Colonic mucosa (tissue), 4 donors: ENCODE measurements at regions of chr7 and their contacts with region 1.

Region 1: DNA sequence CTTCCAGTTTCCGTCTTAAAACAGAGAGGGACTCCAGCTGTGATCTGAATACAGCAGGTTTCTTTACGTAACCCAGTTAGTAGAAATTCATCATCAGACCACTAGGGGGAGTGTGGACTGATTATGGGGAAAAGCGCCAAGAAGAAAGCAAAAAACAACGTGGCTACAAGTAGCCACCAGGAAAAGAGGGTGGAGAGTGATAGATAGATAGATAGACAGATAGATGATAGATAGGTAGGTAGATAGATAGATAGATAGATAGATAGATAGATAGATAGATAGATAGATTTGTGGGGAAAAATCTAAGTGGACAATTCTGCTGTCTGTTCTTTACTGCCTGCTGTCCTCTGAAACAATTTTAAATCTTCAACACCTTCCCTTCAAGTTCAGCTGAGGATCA is 12.7 kb upstream of the AKR1B10 start:
- DNase-seq: peak; percentile 58
- H3K4me3 ChIP-seq: no peak overlapping the region
- H3K27ac ChIP-seq: no peak overlapping the region
- H3K4me1 ChIP-seq: no peaks in the 10 kb centered on the region
- H3K27me3 ChIP-seq: no peaks in the 10 kb centered on the region
- CTCF ChIP-seq: peak; percentile 69

Region 2: DNA sequence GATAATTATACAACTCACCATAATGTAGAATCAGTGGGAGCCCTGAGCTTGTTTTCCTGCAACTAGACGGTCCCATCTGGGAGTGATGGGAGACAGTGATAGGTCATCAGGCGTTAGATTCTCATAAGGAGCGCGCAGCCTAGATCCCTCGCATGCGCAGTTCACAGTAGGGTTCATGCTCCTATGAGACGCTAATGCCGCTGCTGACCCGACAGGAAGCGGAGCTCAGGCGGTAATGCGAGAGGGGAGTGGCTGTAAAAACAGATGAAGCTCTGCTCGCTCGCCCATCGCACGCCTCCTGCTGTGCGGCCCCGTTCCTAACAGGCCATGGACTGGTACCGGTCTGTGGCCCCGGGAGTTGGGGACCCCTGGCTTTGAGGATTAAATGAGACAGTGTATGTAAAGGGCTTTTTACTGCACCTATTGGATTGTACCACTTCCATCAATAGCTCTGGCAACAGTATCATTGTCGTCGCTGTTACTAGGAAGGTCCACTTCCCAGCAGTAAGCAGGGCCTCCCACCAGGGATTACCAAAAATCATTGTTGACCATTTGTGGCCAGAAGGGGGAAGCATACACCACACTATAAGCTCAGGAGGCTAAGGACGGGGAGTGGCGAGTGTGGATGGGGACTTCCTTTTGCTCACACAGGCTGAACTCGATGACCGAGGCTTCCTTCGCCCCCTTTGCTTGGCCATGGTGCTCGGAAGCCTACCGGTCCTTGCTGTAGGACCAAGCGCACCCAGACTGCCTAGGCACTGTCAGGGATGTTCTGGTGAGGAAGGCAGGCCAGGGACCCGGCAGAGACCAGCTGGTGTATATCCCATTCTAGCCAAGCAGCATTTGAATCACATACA is 82.1 kb before region 1 on chr7:
- intact Hi-C with region 1: loop called (anchors 2 kb)
- DNase-seq: peak; percentile 89
- H3K4me3 ChIP-seq: peak overlapping the region; percentile 30
- H3K27ac ChIP-seq: peak overlapping the region; percentile 89
- H3K4me1 ChIP-seq: peaks cover 6% of the 10 kb centered on the region
- H3K27me3 ChIP-seq: no peaks in the 10 kb centered on the region
- CTCF ChIP-seq: peak; percentile 77

Region 3: DNA sequence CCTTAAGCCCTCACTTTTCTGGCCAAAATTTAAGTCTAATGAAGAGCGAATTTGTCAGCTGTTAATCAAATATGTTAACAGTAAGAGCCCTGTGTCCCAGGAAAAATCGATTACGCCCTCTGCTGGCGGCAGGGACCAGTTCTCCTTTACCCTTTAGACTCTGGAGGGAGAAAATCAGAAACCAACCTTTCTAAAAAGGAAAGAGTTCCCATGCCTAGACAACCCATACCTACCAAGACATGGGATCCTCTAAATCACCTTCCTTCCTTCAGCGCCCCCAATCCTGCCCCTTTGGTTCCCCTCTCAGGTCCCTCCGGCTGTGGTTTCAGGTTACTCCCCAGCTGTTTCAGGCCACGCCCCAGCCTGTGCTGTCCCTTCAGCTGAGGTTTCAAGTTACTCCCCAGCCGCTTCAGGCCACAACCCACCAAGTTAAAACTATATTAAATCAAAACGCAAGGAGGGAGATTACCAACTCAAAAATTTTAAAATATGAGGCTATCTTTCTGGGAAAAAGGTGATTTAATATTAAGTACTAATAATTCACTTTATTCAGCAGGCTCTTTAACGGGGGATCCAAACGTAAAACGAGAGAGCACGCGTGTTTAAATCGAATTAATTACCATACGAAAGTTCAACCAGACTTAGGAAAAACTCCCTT is 32.9 kb after region 1 on chr7:
- intact Hi-C with region 1: loop called (anchors 2 kb)
- DNase-seq: peak; percentile 85
- H3K4me3 ChIP-seq: peak overlapping the region; percentile 26
- H3K27ac ChIP-seq: no peak overlapping the region
- H3K4me1 ChIP-seq: no peaks in the 10 kb centered on the region
- H3K27me3 ChIP-seq: no peaks in the 10 kb centered on the region
- CTCF ChIP-seq: peak; percentile 89

Region 4: DNA sequence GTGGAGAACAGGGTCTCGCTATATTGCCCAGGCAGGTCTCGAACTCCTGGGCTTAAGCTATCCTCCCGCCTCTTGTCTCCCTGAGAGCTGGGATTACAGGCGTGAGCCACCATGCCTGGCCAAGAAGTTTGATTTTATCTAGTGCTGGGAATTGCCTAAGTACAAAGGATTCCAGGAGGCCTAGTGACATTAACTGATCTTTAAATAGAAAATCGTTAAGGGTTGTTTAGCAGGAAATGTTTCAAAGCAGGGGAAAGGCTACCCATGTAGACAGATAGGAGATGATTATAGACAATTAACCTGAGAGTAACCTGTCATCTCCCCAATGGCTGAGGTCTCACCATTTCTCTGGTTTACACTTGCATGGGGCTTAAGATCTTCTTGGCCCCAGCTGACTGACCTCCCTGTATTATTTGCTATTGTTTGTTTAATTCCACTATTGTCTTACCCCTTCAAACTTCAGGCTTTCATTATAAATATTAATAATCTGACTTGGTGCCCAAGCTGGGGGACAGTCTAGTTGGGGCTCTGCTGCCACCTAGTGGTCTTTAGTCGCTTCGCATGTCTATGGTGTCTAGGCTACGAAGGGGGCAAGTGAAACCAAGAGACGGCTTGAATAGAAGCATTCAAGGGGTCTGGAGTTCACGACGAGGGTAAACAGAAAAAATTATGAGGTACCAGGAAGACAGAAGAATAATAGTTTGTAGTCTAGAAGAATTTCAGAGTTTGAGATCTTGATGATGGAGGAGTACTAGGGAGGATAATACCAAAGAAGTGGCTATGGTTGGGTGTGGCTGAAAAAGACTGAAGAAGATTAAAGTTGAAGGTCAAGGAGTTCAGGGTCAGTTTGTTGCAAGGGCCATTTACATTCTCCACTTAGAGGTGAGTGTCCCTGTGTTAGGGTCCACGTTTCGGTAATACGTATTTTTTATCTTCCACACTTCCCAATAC is 91.6 kb after region 1 on chr7:
- intact Hi-C with region 1: loop called (anchors 2 kb)
- DNase-seq: peak; percentile 64
- H3K4me3 ChIP-seq: no peak overlapping the region
- H3K27ac ChIP-seq: no peak overlapping the region
- H3K4me1 ChIP-seq: no peaks in the 10 kb centered on the region
- H3K27me3 ChIP-seq: no peaks in the 10 kb centered on the region
- CTCF ChIP-seq: peak; percentile 93